HepG2 (cell line): ENCODE measurements at regions of chr9 and their contacts with region 1.

Region 1: GRCh38 chr9:104863180-104863883 is 64.6 kb downstream of the ABCA1 start:
- DNase-seq: peak; percentile 59
- ATAC-seq: peak; percentile 66
- H3K4me3 ChIP-seq: no peak overlapping the region
- H3K27ac ChIP-seq: peak overlapping the region; percentile 8
- H3K4me1 ChIP-seq: peaks cover 59% of the 10 kb centered on the region
- H3K27me3 ChIP-seq: no peaks in the 10 kb centered on the region
- CTCF ChIP-seq: peak; percentile 70
- EP300 ChIP-seq: no peak
- POLR2A ChIP-seq: no peak
- RAD21 ChIP-seq: peak; percentile 56

Region 2: GRCh38 chr9:104911032-104911607 is 47.8 kb after region 1 on chr9:
- CTCF ChIA-PET with region 1: no interaction called
- POLR2A ChIA-PET with region 1: no interaction called
- in situ Hi-C with region 1: no loop called
- intact Hi-C with region 1: loop called (anchors 5 kb)
- DNase-seq: peak; percentile 43
- ATAC-seq: no peak
- H3K4me3 ChIP-seq: no peak overlapping the region
- H3K27ac ChIP-seq: peak overlapping the region; percentile 76
- H3K4me1 ChIP-seq: peaks cover 100% of the 10 kb centered on the region
- H3K27me3 ChIP-seq: no peaks in the 10 kb centered on the region
- CTCF ChIP-seq: no peak
- EP300 ChIP-seq: no peak
- POLR2A ChIP-seq: no peak
- RAD21 ChIP-seq: no peak

Region 3: DNA sequence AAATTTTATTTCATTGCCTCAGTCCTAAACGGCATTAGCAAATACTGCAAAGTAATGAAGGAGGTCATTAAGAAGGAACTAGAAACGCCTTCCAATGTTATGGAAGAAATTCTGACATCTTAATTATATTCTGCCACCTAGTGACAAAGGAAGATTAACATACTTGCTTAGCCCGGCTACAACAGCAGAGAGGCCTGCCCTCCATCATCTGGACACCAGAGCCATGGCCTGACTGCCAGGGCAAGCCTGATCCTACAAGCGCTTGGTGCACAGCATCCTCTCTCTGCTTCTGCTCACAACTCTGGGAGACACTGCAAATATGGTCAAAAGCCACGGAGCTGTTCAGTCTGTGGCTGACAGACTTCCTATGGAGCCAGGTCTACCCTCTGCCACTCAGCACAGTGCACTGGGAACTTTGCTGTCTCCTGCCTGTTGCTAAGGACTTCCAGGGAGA is 293.8 kb after region 1 on chr9:
- CTCF ChIA-PET with region 1: no interaction called
- POLR2A ChIA-PET with region 1: no interaction called
- in situ Hi-C with region 1: loop called (anchors 5 kb)
- intact Hi-C with region 1: loop called (anchors 1 kb)
- DNase-seq: peak; percentile 24
- ATAC-seq: peak; percentile 92
- H3K4me3 ChIP-seq: no peak overlapping the region
- H3K27ac ChIP-seq: no peak overlapping the region
- H3K4me1 ChIP-seq: peaks cover 24% of the 10 kb centered on the region
- H3K27me3 ChIP-seq: no peaks in the 10 kb centered on the region
- CTCF ChIP-seq: peak; percentile 74
- EP300 ChIP-seq: no peak
- POLR2A ChIP-seq: no peak
- RAD21 ChIP-seq: peak; percentile 41; the same call in 1 of the 2 replicates